CD8-positive, alpha-beta T cell (primary cell): ENCODE measurements at regions of chr1 and their contacts with region 1.

Region 1: DNA sequence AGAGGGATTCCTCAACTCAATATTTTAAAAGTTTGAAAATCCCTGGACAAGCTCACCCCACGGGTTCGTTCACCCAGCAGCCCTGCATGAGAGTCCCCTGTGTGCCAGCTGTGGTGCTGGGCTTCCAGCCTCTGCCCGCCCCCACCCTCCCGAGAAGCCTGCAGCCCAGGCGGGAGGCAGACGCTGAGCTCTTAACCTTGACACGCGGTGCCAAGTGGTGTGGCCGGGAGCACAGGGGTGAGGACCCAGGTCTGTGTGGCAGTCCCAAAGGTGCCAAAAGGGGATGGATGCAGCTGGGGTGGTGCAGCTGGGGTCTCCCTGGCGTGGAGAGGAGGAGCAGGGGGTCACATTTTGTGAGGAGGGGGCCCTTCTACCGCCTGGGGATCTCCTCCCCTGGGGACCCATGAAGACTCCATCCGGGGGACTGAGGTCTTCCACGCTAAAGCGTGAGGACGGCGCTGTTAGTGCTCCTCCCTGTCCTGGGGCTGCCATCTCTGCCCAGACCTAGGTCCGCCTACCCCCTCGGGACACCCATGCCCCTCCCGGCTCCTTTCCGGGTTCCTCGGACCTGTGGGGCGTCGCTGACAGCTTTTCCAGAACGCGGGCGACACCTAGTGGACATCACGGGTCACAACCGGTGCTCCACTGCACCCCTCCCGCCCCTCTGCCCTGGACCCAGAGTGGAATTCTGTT is 12.9 kb downstream of the PLA2G2F start:
- DNase-seq: peak; percentile 56 to 88 (median 79)
- ATAC-seq: peak; percentile 94
- H3K4me3 ChIP-seq: peak overlapping the region; percentile 46 to 53
- H3K4me3 Mint-ChIP-seq: peak overlapping the region; percentile 79
- H3K27ac ChIP-seq: no peak overlapping the region
- H3K27ac Mint-ChIP-seq: no peak overlapping the region
- H3K4me1 ChIP-seq: peaks cover 6% of the 10 kb centered on the region
- H3K4me1 Mint-ChIP-seq: peaks cover 9% of the 10 kb centered on the region
- H3K27me3 ChIP-seq: no peaks in the 10 kb centered on the region
- H3K27me3 Mint-ChIP-seq: no peaks in the 10 kb centered on the region
- CTCF ChIP-seq: peak; percentile 86

Region 2: GRCh38 chr1:19762175-19762779 is 389.8 kb before region 1 on chr1:
- CTCF ChIA-PET with region 1: no interaction called
- POLR2A ChIA-PET with region 1: no interaction called
- intact Hi-C with region 1: loop called in 1 of 2 experiments (anchors 5 kb)
- DNase-seq: peak in 6 of 9 experiments; percentile 12 to 52 (median 32)
- ATAC-seq: no peak
- H3K4me3 ChIP-seq: no peak overlapping the region
- H3K4me3 Mint-ChIP-seq: no peak overlapping the region
- H3K27ac ChIP-seq: no peak overlapping the region
- H3K27ac Mint-ChIP-seq: no peak overlapping the region
- H3K4me1 ChIP-seq: no peaks in the 10 kb centered on the region
- H3K4me1 Mint-ChIP-seq: no peaks in the 10 kb centered on the region
- H3K27me3 ChIP-seq: no peaks in the 10 kb centered on the region
- H3K27me3 Mint-ChIP-seq: no peaks in the 10 kb centered on the region
- CTCF ChIP-seq: peak; percentile 57

Region 3: GRCh38 chr1:19882111-19883071 is 269.7 kb before region 1 on chr1 and contains the start of gene OTUD3:
- CTCF ChIA-PET with region 1: interaction called, 5 read pairs
- POLR2A ChIA-PET with region 1: no interaction called
- intact Hi-C with region 1: loop called in 1 of 2 experiments (anchors 1 kb)
- DNase-seq: peak; percentile 89 to 99 (median 95)
- ATAC-seq: peak; percentile 97
- H3K4me3 ChIP-seq: peak within 1 kb of the TSS; percentile 71 to 88
- H3K4me3 Mint-ChIP-seq: peak within 1 kb of the TSS; percentile 90
- H3K27ac ChIP-seq: peak within 1 kb of the TSS; percentile 67 to 77
- H3K27ac Mint-ChIP-seq: peak within 1 kb of the TSS; percentile 61
- H3K4me1 ChIP-seq: peaks cover 18% of the 10 kb centered on the region
- H3K4me1 Mint-ChIP-seq: peaks cover 43% of the 10 kb centered on the region
- H3K27me3 ChIP-seq: no peaks in the 10 kb centered on the region
- H3K27me3 Mint-ChIP-seq: no peaks in the 10 kb centered on the region
- CTCF ChIP-seq: peak; percentile 90
- total RNA-seq, gene OTUD3: 16.5 to 17.3 TPM

Region 4: GRCh38 chr1:19918057-19918456 is 234.0 kb before region 1 on chr1:
- CTCF ChIA-PET with region 1: interaction called, 120 read pairs
- POLR2A ChIA-PET with region 1: no interaction called
- intact Hi-C with region 1: loop called in 1 of 2 experiments (anchors 1 kb)
- DNase-seq: peak; percentile 67 to 88 (median 81)
- ATAC-seq: peak; percentile 57
- H3K4me3 ChIP-seq: no peak overlapping the region
- H3K4me3 Mint-ChIP-seq: no peak overlapping the region
- H3K27ac ChIP-seq: no peak overlapping the region
- H3K27ac Mint-ChIP-seq: no peak overlapping the region
- H3K4me1 ChIP-seq: no peaks in the 10 kb centered on the region
- H3K4me1 Mint-ChIP-seq: peaks cover 2% of the 10 kb centered on the region
- H3K27me3 ChIP-seq: no peaks in the 10 kb centered on the region
- H3K27me3 Mint-ChIP-seq: peaks cover 5% of the 10 kb centered on the region
- CTCF ChIP-seq: peak; percentile 88

Region 5: DNA sequence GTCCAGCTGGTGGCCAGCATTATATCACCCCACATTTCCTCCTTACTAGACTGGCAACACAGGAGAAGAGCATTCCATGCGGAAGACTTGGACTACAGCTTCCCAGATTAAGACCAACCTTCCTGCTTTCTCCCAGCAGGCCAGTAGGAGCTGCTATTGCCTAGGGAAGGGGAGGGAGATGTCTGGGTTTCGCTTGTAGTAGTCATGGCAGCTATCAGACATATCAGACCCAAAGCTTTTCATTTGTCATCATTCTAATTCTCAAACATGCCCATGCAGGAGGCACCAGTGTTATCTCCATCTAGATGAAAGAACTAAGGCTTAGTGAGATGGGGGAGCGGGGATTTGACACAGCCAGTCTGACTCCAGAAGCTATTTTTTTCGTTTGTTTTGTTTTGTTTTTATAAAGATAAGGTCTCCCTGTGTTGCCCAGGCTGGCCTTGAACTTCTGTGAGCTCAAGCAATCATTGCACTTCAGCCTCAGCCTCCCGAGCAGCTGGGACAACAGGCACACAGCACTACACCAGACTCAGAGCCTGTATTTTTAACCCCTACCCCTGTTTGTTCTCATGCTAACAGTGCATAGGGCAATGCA is 177.1 kb before region 1 on chr1:
- CTCF ChIA-PET with region 1: interaction called, 5 read pairs
- POLR2A ChIA-PET with region 1: no interaction called
- intact Hi-C with region 1: loop called (anchors 1 to 2 kb)
- DNase-seq: peak in 3 of 9 experiments; percentile 48 to 60 (median 52)
- ATAC-seq: no peak
- H3K4me3 ChIP-seq: no peak overlapping the region
- H3K4me3 Mint-ChIP-seq: no peak overlapping the region
- H3K27ac ChIP-seq: no peak overlapping the region
- H3K27ac Mint-ChIP-seq: no peak overlapping the region
- H3K4me1 ChIP-seq: no peaks in the 10 kb centered on the region
- H3K4me1 Mint-ChIP-seq: no peaks in the 10 kb centered on the region
- H3K27me3 ChIP-seq: peaks cover 0 to 2% of the 10 kb centered on the region in 2 experiments
- H3K27me3 Mint-ChIP-seq: peaks cover 41% of the 10 kb centered on the region
- CTCF ChIP-seq: no peak

Region 6: GRCh38 chr1:20165522-20165951 is 13.5 kb after region 1 on chr1:
- CTCF ChIA-PET with region 1: interaction called, 11 read pairs
- POLR2A ChIA-PET with region 1: no interaction called
- intact Hi-C with region 1: no loop called
- DNase-seq: peak in 1 of 9 experiments; percentile 17
- ATAC-seq: no peak
- H3K4me3 ChIP-seq: no peak overlapping the region
- H3K4me3 Mint-ChIP-seq: no peak overlapping the region
- H3K27ac ChIP-seq: no peak overlapping the region
- H3K27ac Mint-ChIP-seq: no peak overlapping the region
- H3K4me1 ChIP-seq: no peaks in the 10 kb centered on the region
- H3K4me1 Mint-ChIP-seq: no peaks in the 10 kb centered on the region
- H3K27me3 ChIP-seq: peaks cover 0 to 2% of the 10 kb centered on the region in 2 experiments
- H3K27me3 Mint-ChIP-seq: peaks cover 15% of the 10 kb centered on the region
- CTCF ChIP-seq: no peak